Right cardiac atrium (tissue), 5 donors: ENCODE measurements at regions of chr11 and their contacts with region 1.

Region 1: DNA sequence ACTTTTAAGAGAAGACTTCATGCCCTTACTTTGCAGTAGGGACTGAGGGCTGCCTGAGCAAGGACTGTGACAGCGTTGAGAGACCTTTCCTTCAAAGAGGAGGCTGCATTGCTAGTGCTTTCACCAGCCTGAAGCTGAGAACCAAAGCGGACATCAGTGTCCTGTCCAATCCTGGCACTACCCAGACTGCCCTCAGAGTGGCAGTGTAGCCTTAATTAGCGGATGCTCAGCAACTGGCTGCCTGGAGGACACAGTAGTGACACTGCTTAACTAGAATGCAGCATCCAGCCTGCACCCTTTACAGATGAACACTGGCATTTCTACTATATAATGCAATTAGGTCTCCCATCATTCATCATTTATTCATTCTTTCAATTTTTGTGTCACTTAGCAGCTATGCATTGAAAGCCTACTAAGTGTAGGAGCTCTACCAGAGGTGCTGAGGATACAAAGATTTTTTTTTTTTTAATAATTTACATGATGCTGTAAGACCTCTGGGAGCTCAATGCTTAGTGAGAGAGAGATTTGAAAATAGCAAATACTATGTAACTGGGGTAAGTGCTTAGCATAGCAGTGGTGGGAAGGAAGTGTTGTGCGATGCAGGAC is 36.9 kb upstream of the SLC36A4 start:
- DNase-seq: peak; percentile 62 to 89 (median 79)
- ATAC-seq: peak; percentile 95 to 98
- H3K4me3 ChIP-seq: no peak overlapping the region
- H3K27ac ChIP-seq: no peak overlapping the region
- H3K4me1 ChIP-seq: no peaks in the 10 kb centered on the region
- H3K27me3 ChIP-seq: no peaks in the 10 kb centered on the region

Region 2: GRCh38 chr11:93537767-93538261 is 303.1 kb after region 1 on chr11:
- intact Hi-C with region 1: loop called (anchors 2 to 10 kb)
- DNase-seq: peak in 2 of 3 donors; percentile 28 to 64
- ATAC-seq: peak; percentile 15 to 16
- H3K4me3 ChIP-seq: no peak overlapping the region
- H3K27ac ChIP-seq: peak overlapping the region; percentile 66
- H3K4me1 ChIP-seq: peaks cover 14% of the 10 kb centered on the region
- H3K27me3 ChIP-seq: no peaks in the 10 kb centered on the region

Region 3: GRCh38 chr11:93543292-93543977 is 308.7 kb after region 1 on chr11 and contains the start of gene SMCO4:
- intact Hi-C with region 1: loop called (anchors 2 to 10 kb)
- DNase-seq: peak; percentile 90 to 96 (median 94)
- ATAC-seq: peak; percentile 95
- H3K4me3 ChIP-seq: peak within 1 kb of the TSS; percentile 79
- H3K27ac ChIP-seq: peak within 1 kb of the TSS; percentile 76
- H3K4me1 ChIP-seq: peaks cover 3% of the 10 kb centered on the region
- H3K27me3 ChIP-seq: no peaks in the 10 kb centered on the region
- total RNA-seq, gene SMCO4: 31.8 to 95.6 (median 59.8) TPM

Region 4: DNA sequence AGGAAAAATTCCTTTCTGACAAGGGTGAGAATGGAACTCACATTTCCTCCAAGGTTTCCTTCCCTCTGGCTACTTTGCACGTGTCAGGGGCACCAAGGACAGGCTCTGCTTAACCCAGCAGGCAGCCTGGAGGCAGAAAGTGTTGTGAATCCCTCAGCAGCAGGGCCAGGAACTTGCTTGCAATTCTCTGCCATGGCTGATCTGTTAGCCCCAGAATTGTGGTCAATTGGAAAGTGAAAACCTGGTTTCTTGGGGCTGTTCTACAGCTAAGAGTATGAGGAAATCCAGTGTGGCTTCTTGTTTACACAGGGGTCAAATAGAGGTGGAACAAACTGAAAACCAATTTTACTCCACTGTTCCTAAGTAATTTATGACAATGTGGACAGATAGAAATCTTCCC is 388.5 kb after region 1 on chr11:
- intact Hi-C with region 1: loop called in 1 of 4 experiments (anchors 10 kb)
- DNase-seq: no peak
- ATAC-seq: no peak
- H3K4me3 ChIP-seq: no peak overlapping the region
- H3K27ac ChIP-seq: no peak overlapping the region
- H3K4me1 ChIP-seq: peaks cover 2% of the 10 kb centered on the region
- H3K27me3 ChIP-seq: no peaks in the 10 kb centered on the region

Region 5: DNA sequence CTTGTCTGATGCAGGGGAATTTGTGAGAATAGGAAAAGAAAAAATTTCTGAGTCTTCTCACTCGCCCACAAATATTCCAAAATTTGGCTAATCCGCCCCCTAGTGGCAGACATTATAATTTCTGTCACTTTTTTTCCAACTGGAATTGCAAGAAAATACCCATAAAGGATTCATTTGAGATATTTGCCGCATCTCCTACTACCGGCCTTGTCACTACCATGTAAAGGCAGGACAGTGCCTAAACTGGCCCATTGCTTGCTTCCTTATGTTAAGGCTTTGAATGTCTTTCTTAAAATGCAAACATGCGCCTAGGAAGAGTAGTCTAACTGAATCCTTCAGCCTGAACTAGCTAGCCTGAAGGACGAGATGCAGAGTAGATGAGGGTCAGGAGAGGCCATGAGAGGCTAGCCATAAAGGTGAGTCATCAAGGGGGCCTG is 417.5 kb after region 1 on chr11:
- intact Hi-C with region 1: loop called (anchors 2 to 5 kb)
- DNase-seq: no peak
- ATAC-seq: peak in 1 of 2 donors; percentile 11
- H3K4me3 ChIP-seq: no peak overlapping the region
- H3K27ac ChIP-seq: no peak overlapping the region
- H3K4me1 ChIP-seq: no peaks in the 10 kb centered on the region
- H3K27me3 ChIP-seq: peaks cover 3% of the 10 kb centered on the region